Heart right ventricle (tissue), 16 donors: ENCODE measurements at regions of chr10 and their contacts with region 1.

Region 1: GRCh38 chr10:97553575-97554031 is 19.0 kb upstream of the ANKRD2 start:
- DNase-seq: peak; percentile 65 to 71
- ATAC-seq: peak; percentile 86 to 93 (median 88)
- H3K4me3 ChIP-seq: no peak overlapping the region
- H3K27ac ChIP-seq: no peak overlapping the region
- H3K4me1 ChIP-seq: peaks cover 8 to 41% (median 28%) of the 10 kb centered on the region in 9 donors
- H3K27me3 ChIP-seq: no peaks in the 10 kb centered on the region
- CTCF ChIP-seq: peak; percentile 69 to 92 (median 83)

Region 2: GRCh38 chr10:97463363-97464132 is 90.1 kb before region 1 on chr10:
- intact Hi-C with region 1: loop called (anchors 2 to 5 kb)
- DNase-seq: peak in 1 of 2 donors; percentile 44
- ATAC-seq: peak; percentile 51 to 69 (median 58)
- H3K4me3 ChIP-seq: no peak overlapping the region
- H3K27ac ChIP-seq: peak overlapping the region in 4 of 10 donors; percentile 1 to 33 (median 16)
- H3K4me1 ChIP-seq: peaks cover 0 to 16% (median 4%) of the 10 kb centered on the region in 9 donors
- H3K27me3 ChIP-seq: no peaks in the 10 kb centered on the region
- CTCF ChIP-seq: peak; percentile 60 to 89 (median 85)

Region 3: GRCh38 chr10:97518301-97519043 is 35.1 kb before region 1 on chr10:
- intact Hi-C with region 1: no loop called
- DNase-seq: no peak
- ATAC-seq: peak in 6 of 8 donors; percentile 1 to 56 (median 32)
- H3K4me3 ChIP-seq: no peak overlapping the region
- H3K27ac ChIP-seq: peak overlapping the region; percentile 3 to 78 (median 50)
- H3K4me1 ChIP-seq: peaks cover 18 to 98% (median 75%) of the 10 kb centered on the region in 9 donors
- H3K27me3 ChIP-seq: no peaks in the 10 kb centered on the region
- CTCF ChIP-seq: no peak